ENCODE measurements at regions of chr9 and their contacts with region 1.

Region 1: GRCh38 chr9:3441197-3441816 is 84.5 kb downstream of the RFX3 start:
- DNase-seq: peak; percentile 58
- H3K4me3 Mint-ChIP-seq: no peak overlapping the region
- H3K27ac Mint-ChIP-seq: no peak overlapping the region
- H3K4me1 Mint-ChIP-seq: peaks cover 4% of the 10 kb centered on the region
- H3K27me3 Mint-ChIP-seq: no peaks in the 10 kb centered on the region

Region 2: GRCh38 chr9:2857564-2858198 is 583.6 kb before region 1 on chr9:
- CTCF ChIA-PET with region 1: interaction called, 4 read pairs
- POLR2A ChIA-PET with region 1: no interaction called
- intact Hi-C with region 1: loop called (anchors 1 kb)
- DNase-seq: peak; percentile 74
- H3K4me3 Mint-ChIP-seq: no peak overlapping the region
- H3K27ac Mint-ChIP-seq: no peak overlapping the region
- H3K4me1 Mint-ChIP-seq: peaks cover 3% of the 10 kb centered on the region
- H3K27me3 Mint-ChIP-seq: peaks cover 11% of the 10 kb centered on the region

Region 3: DNA sequence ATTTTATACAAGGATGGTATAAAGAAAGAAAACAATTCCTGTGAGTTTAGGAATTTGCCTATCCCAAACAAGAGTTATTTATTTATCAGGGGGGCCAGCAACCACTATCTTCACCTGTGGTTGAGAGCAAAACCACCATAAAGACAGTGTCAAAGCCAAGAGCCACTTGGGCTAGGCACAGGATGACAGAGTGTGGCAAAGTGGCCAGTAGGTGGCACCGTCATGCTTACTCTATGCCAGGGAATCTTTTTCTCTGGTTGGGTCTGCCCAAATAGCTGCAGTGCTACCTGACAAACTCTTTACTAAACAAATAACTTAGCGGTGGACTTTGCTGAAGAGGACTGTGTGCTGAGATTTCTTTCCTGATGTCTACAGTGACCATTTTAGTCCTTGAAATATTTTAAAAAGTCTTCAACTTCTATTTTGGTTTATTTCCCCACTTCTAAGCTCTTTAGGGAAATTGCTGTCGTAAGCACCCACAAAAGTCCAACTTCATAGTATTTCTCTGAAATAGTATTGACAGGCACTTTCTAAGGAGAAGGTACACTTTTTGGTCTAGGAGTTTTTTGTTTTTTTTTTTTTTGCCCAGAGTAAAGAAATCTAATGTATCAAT is 200.5 kb before region 1 on chr9:
- CTCF ChIA-PET with region 1: interaction called, 104 read pairs
- POLR2A ChIA-PET with region 1: no interaction called
- intact Hi-C with region 1: loop called (anchors 1 kb)
- DNase-seq: peak; percentile 78
- H3K4me3 Mint-ChIP-seq: no peak overlapping the region
- H3K27ac Mint-ChIP-seq: no peak overlapping the region
- H3K4me1 Mint-ChIP-seq: peaks cover 5% of the 10 kb centered on the region
- H3K27me3 Mint-ChIP-seq: no peaks in the 10 kb centered on the region

Region 4: GRCh38 chr9:3331817-3332216 is 109.5 kb before region 1 on chr9:
- CTCF ChIA-PET with region 1: interaction called, 18 read pairs
- POLR2A ChIA-PET with region 1: no interaction called
- intact Hi-C with region 1: loop called (anchors 2 kb)
- DNase-seq: peak; percentile 11
- H3K4me3 Mint-ChIP-seq: no peak overlapping the region
- H3K27ac Mint-ChIP-seq: no peak overlapping the region
- H3K4me1 Mint-ChIP-seq: peaks cover under 1% of the 10 kb centered on the region
- H3K27me3 Mint-ChIP-seq: no peaks in the 10 kb centered on the region

Region 5: DNA sequence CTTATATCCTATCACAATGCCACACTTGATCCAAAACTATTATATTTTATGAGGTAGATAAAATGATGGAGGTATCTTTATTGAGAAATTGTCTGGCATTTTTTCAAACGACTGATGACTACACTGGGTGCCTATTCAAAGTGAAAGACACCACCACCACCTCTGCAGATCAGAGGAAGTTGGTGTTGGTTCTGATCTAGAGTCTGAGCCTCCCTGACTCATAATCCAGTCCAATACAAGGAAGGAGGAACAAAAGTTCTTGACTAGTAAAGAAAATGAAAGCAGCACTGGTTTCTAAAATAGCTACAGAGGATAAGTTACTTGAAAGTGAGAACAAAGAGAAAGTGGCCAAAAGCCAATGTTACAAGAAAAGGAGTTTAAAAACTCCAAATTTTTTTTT is 55.4 kb before region 1 on chr9:
- CTCF ChIA-PET with region 1: interaction called, 3 read pairs
- POLR2A ChIA-PET with region 1: no interaction called
- intact Hi-C with region 1: loop called (anchors 5 kb)
- DNase-seq: peak; percentile 65
- H3K4me3 Mint-ChIP-seq: no peak overlapping the region
- H3K27ac Mint-ChIP-seq: no peak overlapping the region
- H3K4me1 Mint-ChIP-seq: peaks cover 29% of the 10 kb centered on the region
- H3K27me3 Mint-ChIP-seq: no peaks in the 10 kb centered on the region

Region 6: DNA sequence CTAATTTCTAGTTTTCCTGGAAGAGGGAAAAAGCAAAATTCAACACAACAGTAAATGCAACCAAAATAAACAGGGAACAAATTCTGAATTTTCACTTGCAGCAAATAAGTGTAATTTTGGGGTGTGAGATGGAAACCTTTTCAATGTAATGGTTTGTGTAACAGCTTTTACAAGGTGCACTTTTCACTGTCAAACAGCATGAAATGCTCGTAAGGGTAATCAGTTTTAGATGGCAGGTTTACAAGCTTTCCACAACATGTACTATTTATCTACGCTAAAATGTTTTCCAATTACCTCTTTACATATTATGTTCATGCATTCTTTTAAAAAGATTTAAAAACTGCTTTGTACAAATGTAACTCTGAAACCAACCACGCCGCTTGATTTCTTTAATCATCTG is 30.8 kb before region 1 on chr9:
- CTCF ChIA-PET with region 1: interaction called, 12 read pairs
- POLR2A ChIA-PET with region 1: no interaction called
- intact Hi-C with region 1: no loop called
- DNase-seq: no peak
- H3K4me3 Mint-ChIP-seq: no peak overlapping the region
- H3K27ac Mint-ChIP-seq: no peak overlapping the region
- H3K4me1 Mint-ChIP-seq: peaks cover 2% of the 10 kb centered on the region
- H3K27me3 Mint-ChIP-seq: no peaks in the 10 kb centered on the region

Region 7: GRCh38 chr9:3461237-3461636 is 19.9 kb after region 1 on chr9:
- CTCF ChIA-PET with region 1: interaction called, 10 read pairs
- POLR2A ChIA-PET with region 1: no interaction called
- intact Hi-C with region 1: no loop called
- DNase-seq: no peak
- H3K4me3 Mint-ChIP-seq: no peak overlapping the region
- H3K27ac Mint-ChIP-seq: no peak overlapping the region
- H3K4me1 Mint-ChIP-seq: peaks cover 2% of the 10 kb centered on the region
- H3K27me3 Mint-ChIP-seq: no peaks in the 10 kb centered on the region

Region 8: GRCh38 chr9:3578786-3579185 is 137.5 kb after region 1 on chr9:
- CTCF ChIA-PET with region 1: no interaction called
- POLR2A ChIA-PET with region 1: no interaction called
- intact Hi-C with region 1: no loop called
- DNase-seq: peak; percentile 25
- H3K4me3 Mint-ChIP-seq: no peak overlapping the region
- H3K27ac Mint-ChIP-seq: peak overlapping the region; percentile 31
- H3K4me1 Mint-ChIP-seq: peaks cover 8% of the 10 kb centered on the region
- H3K27me3 Mint-ChIP-seq: no peaks in the 10 kb centered on the region